ENCODE measurements at regions of chr7 and their contacts with region 1.

Region 1: DNA sequence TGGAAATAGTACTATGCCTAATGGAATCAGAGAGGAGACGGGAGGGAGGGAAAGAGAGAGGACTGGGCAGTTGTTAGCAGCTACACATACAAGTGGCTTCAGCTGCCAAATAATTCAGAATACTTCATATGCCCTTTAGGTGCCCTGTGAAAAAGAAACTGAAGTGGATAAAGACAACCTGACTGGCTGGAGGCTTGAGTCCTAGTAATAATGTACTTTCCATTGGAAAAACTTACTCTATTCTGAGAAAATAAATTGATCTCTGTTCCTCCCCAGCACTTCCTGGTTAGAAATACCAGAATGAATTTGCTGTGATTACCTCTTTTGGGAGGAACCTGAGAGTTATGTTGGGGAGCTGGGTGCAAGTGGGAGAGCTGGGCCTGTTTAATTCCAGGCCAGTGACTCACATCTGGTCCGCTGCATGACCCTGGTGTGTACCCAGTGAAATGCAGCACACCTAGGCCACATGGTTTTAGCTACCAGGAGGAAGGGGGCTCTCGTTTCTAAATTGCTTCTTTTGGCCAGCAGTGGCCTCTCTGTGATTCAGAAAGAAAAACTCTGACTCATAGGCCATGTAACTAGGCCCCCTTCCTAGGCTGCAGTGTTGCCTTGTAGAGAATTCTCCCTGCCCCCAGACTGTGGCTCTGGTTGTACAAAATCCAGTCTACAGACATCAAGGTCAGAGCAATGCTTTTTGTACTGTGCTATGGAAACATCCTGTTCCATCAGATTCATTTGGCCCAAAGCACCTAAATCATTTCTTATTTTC is 6.5 kb downstream of the AGFG2 start:
- DNase-seq: peak; percentile 40
- H3K4me3 ChIP-seq: no peak overlapping the region
- H3K27me3 ChIP-seq: no peaks in the 10 kb centered on the region
- CTCF ChIP-seq: peak; percentile 32

Region 2: DNA sequence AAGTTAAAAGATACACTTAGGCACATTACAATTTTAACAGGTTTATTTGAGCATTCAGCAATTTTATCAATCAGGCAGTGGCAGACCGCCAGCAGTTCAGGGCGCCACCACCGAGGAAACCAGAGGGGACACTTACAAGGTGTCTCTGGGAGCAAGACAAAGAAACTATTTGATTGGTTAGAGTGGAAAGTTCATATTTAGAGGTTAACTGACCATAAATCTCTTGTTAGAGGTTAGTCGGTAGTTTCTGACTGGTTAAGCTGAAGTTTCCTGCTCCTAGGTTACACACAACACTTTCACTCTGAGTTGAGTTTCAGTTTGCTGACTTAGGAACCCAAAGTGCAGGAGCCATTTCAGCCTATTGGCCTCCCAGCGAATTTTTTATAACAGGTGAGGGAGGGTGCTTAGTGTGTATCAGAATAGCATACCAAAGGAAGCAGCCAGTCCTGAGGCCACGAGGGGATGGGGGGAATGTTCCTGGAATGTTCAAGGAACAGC is 336.6 kb before region 1 on chr7:
- CTCF ChIA-PET with region 1: no interaction called
- POLR2A ChIA-PET with region 1: no interaction called
- DNase-seq: no peak
- H3K4me3 ChIP-seq: no peak overlapping the region
- H3K27me3 ChIP-seq: no peaks in the 10 kb centered on the region
- CTCF ChIP-seq: no peak

Region 3: DNA sequence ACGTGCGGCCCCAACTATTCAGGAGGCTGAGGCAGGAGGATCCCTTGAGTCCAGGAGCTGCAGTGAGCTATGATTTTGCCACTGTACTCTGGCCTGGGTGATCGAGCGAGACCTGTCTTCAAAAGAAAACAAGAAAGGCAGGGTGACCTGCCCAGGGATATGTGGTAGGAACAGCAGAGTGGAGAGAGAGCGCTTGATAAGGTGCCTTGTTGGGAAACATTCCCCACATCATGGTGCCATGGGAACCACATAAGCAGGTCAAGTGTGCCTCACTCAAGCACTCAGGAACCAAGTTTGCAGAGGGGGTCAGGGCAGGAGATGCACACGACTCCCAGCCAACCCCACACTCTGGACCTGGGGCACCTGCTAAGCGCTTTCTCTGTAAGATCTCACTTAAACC is 288.5 kb before region 1 on chr7:
- CTCF ChIA-PET with region 1: no interaction called
- POLR2A ChIA-PET with region 1: no interaction called
- DNase-seq: no peak
- H3K4me3 ChIP-seq: no peak overlapping the region
- H3K27me3 ChIP-seq: no peaks in the 10 kb centered on the region
- CTCF ChIP-seq: no peak

Region 4: GRCh38 chr7:100469227-100470044 is 76.1 kb before region 1 on chr7:
- CTCF ChIA-PET with region 1: interaction called, 14 read pairs
- POLR2A ChIA-PET with region 1: no interaction called
- DNase-seq: no peak
- H3K4me3 ChIP-seq: no peak overlapping the region
- H3K27me3 ChIP-seq: no peaks in the 10 kb centered on the region
- CTCF ChIP-seq: peak; percentile 98

Region 5: GRCh38 chr7:100493476-100494264 is 51.9 kb before region 1 on chr7:
- CTCF ChIA-PET with region 1: interaction called, 6 read pairs
- POLR2A ChIA-PET with region 1: interaction called, 10 read pairs
- DNase-seq: no peak
- H3K4me3 ChIP-seq: no peak overlapping the region
- H3K27me3 ChIP-seq: peaks cover 1% of the 10 kb centered on the region; the same call in 1 of the 2 replicates
- CTCF ChIP-seq: no peak

Region 6: GRCh38 chr7:100911467-100911866 is 365.9 kb after region 1 on chr7:
- CTCF ChIA-PET with region 1: no interaction called
- POLR2A ChIA-PET with region 1: no interaction called
- DNase-seq: no peak
- H3K4me3 ChIP-seq: no peak overlapping the region
- H3K27me3 ChIP-seq: no peaks in the 10 kb centered on the region
- CTCF ChIP-seq: no peak